SK-N-SH (cell line): ENCODE measurements at regions of chr12 and their contacts with region 1.

Region 1: DNA sequence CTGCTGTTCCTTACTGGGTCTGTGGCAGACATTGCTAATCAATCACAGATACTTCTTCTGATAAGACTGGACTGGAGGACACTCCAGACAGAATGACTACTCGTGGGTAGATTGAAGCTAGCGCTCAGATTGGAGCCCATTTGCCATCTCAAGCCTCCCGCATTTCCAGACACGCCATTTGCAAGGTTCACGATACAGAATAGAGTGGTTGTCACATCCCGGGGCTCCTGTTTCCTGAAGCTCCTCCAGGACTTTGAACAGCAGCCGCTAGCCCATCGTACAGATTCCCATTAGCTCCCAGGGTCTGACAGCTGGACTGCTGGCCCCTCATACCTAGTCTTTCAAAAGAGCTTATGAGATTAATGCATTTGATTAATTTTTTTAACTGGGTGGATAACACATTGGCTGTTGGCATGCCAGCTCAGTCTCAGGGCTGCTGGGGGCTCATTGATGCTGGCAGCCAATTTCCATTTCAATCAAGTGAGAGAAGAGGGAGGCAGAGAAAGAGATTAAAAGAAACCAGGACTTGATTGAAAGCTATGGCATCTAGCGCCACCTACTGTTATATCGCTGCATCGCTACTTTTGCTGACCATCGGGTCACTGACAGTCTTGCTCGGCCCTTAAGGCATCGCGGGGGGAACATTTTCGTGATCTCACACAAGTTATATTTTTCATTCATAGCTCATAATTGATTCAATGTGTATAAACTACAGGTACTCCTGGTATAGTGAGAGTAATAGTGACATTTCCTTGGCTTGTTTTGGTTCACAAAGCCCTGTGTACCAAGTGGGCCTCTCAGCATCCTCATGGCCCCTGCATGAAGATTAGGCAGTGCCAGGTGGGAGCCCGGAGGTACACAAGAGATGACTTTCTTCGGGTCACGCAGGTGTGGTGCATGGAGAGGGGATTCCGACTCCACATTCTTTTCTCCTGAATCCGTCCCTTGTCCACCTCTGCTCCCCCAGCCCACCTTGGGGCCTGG is 78.6 kb downstream of the CCDC60 start:
- DNase-seq: peak; percentile 70
- H3K4me3 ChIP-seq: no peak overlapping the region
- H3K27ac ChIP-seq: no peak overlapping the region
- H3K4me1 ChIP-seq: peaks cover 0 to 3% of the 10 kb centered on the region in 2 experiments; a peak in 1 of 4 replicates
- H3K27me3 ChIP-seq: no peaks in the 10 kb centered on the region
- CTCF ChIP-seq: peak; percentile 84
- EP300 ChIP-seq: no peak
- RAD21 ChIP-seq: peak; percentile 91

Region 2: GRCh38 chr12:118404876-118405521 is 1008.1 kb before region 1 on chr12:
- CTCF ChIA-PET with region 1: interaction called, 10 read pairs
- POLR2A ChIA-PET with region 1: no interaction called
- DNase-seq: peak; percentile 44
- H3K4me3 ChIP-seq: no peak overlapping the region; a peak in 1 of 4 replicates
- H3K27ac ChIP-seq: no peak overlapping the region
- H3K4me1 ChIP-seq: no peaks in the 10 kb centered on the region; a peak in 1 of 4 replicates
- H3K27me3 ChIP-seq: no peaks in the 10 kb centered on the region
- CTCF ChIP-seq: peak; percentile 92
- EP300 ChIP-seq: no peak
- RAD21 ChIP-seq: peak; percentile 85

Region 3: GRCh38 chr12:118970856-118971255 is 442.2 kb before region 1 on chr12:
- CTCF ChIA-PET with region 1: no interaction called
- POLR2A ChIA-PET with region 1: no interaction called
- DNase-seq: no peak
- H3K4me3 ChIP-seq: no peak overlapping the region
- H3K27ac ChIP-seq: no peak overlapping the region
- H3K4me1 ChIP-seq: no peaks in the 10 kb centered on the region
- H3K27me3 ChIP-seq: no peaks in the 10 kb centered on the region
- CTCF ChIP-seq: no peak
- EP300 ChIP-seq: no peak
- RAD21 ChIP-seq: no peak

Region 4: GRCh38 chr12:119008691-119009221 is 404.3 kb before region 1 on chr12:
- CTCF ChIA-PET with region 1: interaction called, 11 read pairs
- POLR2A ChIA-PET with region 1: no interaction called
- DNase-seq: peak; percentile 74
- H3K4me3 ChIP-seq: peak overlapping the region in 1 of 2 experiments; percentile 24; a peak in 1 of 4 replicates
- H3K27ac ChIP-seq: peak overlapping the region in 1 of 2 experiments; percentile 92; a peak in 2 of 4 replicates
- H3K4me1 ChIP-seq: peaks cover 0 to 53% of the 10 kb centered on the region in 2 experiments; a peak in 2 of 4 replicates
- H3K27me3 ChIP-seq: no peaks in the 10 kb centered on the region
- CTCF ChIP-seq: no peak
- EP300 ChIP-seq: peak in 1 of 2 experiments; percentile 68; a peak in 1 of 4 replicates
- RAD21 ChIP-seq: no peak

Region 5: GRCh38 chr12:119082496-119082895 is 330.6 kb before region 1 on chr12:
- CTCF ChIA-PET with region 1: interaction called, 24 read pairs
- POLR2A ChIA-PET with region 1: no interaction called
- DNase-seq: peak; percentile 62
- H3K4me3 ChIP-seq: no peak overlapping the region
- H3K27ac ChIP-seq: peak overlapping the region in 1 of 2 experiments; percentile 88; a peak in 2 of 4 replicates
- H3K4me1 ChIP-seq: peaks cover 0 to 50% of the 10 kb centered on the region in 2 experiments; a peak in 2 of 4 replicates
- H3K27me3 ChIP-seq: no peaks in the 10 kb centered on the region
- CTCF ChIP-seq: no peak
- EP300 ChIP-seq: peak in 1 of 2 experiments; percentile 80; a peak in 2 of 4 replicates
- RAD21 ChIP-seq: peak; percentile 8; the same call in 1 of the 2 replicates

Region 6: DNA sequence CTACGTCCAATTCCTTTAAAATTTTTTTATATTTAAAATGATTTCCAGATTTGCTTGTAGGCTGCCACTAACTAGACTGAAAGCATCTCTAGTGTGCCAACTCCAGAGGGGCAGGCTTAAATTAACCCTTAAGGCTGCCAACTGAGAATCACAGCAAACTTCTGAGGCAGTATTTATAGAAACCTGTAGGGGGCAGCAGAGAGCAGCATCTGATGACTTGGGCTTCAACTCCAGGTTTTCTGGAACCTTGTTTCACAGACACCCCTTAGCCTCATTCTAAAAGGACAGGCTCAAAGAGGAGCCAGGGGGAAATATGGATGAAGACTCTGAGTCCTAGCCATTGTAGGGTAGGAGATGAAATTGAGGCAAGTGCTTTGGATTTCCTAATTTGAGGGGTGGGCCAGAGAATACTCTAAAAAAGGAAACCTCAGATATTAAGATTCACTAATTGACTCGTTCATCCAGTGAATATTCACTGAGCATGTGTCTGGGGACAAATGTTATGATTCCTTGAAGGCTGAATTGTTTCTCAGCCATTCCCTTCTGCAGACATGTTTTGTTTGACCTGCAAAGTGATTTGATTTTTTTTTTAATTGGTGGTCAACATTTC is 297.7 kb before region 1 on chr12:
- CTCF ChIA-PET with region 1: interaction called, 62 read pairs
- POLR2A ChIA-PET with region 1: no interaction called
- DNase-seq: peak; percentile 75
- H3K4me3 ChIP-seq: no peak overlapping the region; a peak in 1 of 4 replicates
- H3K27ac ChIP-seq: no peak overlapping the region
- H3K4me1 ChIP-seq: peaks cover 0 to 6% of the 10 kb centered on the region in 2 experiments; a peak in 2 of 4 replicates
- H3K27me3 ChIP-seq: no peaks in the 10 kb centered on the region
- CTCF ChIP-seq: peak; percentile 71
- EP300 ChIP-seq: no peak
- RAD21 ChIP-seq: peak; percentile 74

Region 7: GRCh38 chr12:119206348-119207062 is 206.6 kb before region 1 on chr12:
- CTCF ChIA-PET with region 1: interaction called, 11 read pairs
- POLR2A ChIA-PET with region 1: no interaction called
- DNase-seq: no peak
- H3K4me3 ChIP-seq: no peak overlapping the region
- H3K27ac ChIP-seq: no peak overlapping the region
- H3K4me1 ChIP-seq: peaks cover 0 to 12% of the 10 kb centered on the region in 2 experiments; a peak in 1 of 4 replicates
- H3K27me3 ChIP-seq: no peaks in the 10 kb centered on the region
- CTCF ChIP-seq: no peak
- EP300 ChIP-seq: no peak
- RAD21 ChIP-seq: peak; percentile 22; the same call in 1 of the 2 replicates

Region 8: DNA sequence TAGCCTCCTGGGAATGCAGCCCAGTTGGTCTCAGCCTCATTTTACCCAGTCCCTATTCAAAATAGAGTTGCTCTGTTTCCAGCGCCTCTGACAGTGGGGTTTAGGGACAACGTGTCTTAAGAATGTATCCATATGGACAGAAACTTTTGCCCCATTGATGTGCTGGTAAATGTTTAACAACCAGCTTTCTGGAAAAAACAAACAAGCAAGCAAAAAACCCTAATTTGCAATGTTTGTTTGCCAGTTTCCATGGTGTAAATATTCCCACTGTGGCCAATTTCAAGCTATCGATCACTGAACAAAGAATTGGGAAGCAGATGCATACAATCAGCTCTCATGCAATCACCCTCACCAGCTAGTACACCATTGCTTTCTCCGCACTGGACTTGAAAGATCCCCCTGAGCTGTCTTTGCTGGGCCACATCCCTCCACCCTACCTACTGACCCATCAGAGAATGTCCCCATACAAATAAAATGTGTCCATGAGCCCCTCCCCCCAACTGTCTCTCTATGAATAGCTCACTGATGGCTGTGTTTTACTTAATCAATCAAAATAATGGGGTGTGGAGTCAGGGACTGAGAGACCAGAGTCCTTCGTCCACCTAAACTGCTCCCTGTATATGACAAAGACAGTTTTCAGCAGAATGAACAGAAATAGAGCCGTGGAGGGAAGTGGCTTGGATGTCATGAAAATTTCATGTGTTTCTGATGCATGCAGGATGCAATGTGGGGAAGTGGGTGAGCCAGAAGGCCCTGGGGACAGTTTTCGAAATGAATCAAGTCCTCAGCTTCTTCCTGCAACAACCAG is 37.8 kb before region 1 on chr12:
- CTCF ChIA-PET with region 1: no interaction called
- POLR2A ChIA-PET with region 1: no interaction called
- DNase-seq: no peak
- H3K4me3 ChIP-seq: no peak overlapping the region
- H3K27ac ChIP-seq: no peak overlapping the region
- H3K4me1 ChIP-seq: no peaks in the 10 kb centered on the region
- H3K27me3 ChIP-seq: no peaks in the 10 kb centered on the region
- CTCF ChIP-seq: no peak
- EP300 ChIP-seq: no peak
- RAD21 ChIP-seq: no peak

Region 9: DNA sequence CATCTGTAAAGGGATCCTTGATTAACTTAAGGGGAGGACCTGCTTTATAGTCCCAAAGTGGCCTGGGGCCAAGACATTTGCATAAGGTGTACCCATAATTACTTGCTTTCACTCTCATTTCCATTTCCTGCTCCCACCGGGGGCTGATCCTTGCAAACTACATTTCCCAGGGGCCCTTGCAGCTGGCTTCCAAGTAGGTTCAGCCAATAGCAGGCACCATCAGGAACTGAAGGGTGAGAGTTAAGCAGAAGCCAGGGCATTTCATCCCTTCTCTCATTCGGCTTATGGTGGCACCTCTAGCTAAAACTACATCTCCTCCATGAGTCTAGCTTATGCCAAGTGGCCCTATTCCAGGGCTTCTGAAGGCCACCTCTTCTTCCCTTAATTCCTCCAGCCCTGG is 10.2 kb after region 1 on chr12:
- CTCF ChIA-PET with region 1: interaction called, 12 read pairs
- POLR2A ChIA-PET with region 1: no interaction called
- DNase-seq: peak; percentile 30
- H3K4me3 ChIP-seq: no peak overlapping the region
- H3K27ac ChIP-seq: no peak overlapping the region
- H3K4me1 ChIP-seq: no peaks in the 10 kb centered on the region
- H3K27me3 ChIP-seq: no peaks in the 10 kb centered on the region
- CTCF ChIP-seq: no peak
- EP300 ChIP-seq: no peak
- RAD21 ChIP-seq: no peak

Region 10: GRCh38 chr12:119528241-119528640 is 115.1 kb after region 1 on chr12:
- CTCF ChIA-PET with region 1: no interaction called
- POLR2A ChIA-PET with region 1: no interaction called
- DNase-seq: no peak
- H3K4me3 ChIP-seq: no peak overlapping the region
- H3K27ac ChIP-seq: no peak overlapping the region
- H3K4me1 ChIP-seq: no peaks in the 10 kb centered on the region
- H3K27me3 ChIP-seq: no peaks in the 10 kb centered on the region
- CTCF ChIP-seq: no peak
- EP300 ChIP-seq: no peak
- RAD21 ChIP-seq: no peak